Activated B cell treated with CpG ODN at 0.5 μM for 24 hours (primary cell): ENCODE measurements at regions of chr14 and their contacts with region 1.

Region 1: GRCh38 chr14:61475316-61475715 is 153.9 kb downstream of the PRKCH start:
- DNase-seq: no peak
- ATAC-seq: no peak
- H3K4me3 Mint-ChIP-seq: peak overlapping the region; percentile 19
- H3K27ac Mint-ChIP-seq: peak overlapping the region; percentile 77
- H3K4me1 Mint-ChIP-seq: peaks cover 96% of the 10 kb centered on the region
- H3K27me3 Mint-ChIP-seq: no peaks in the 10 kb centered on the region
- CTCF ChIP-seq: no peak

Region 2: DNA sequence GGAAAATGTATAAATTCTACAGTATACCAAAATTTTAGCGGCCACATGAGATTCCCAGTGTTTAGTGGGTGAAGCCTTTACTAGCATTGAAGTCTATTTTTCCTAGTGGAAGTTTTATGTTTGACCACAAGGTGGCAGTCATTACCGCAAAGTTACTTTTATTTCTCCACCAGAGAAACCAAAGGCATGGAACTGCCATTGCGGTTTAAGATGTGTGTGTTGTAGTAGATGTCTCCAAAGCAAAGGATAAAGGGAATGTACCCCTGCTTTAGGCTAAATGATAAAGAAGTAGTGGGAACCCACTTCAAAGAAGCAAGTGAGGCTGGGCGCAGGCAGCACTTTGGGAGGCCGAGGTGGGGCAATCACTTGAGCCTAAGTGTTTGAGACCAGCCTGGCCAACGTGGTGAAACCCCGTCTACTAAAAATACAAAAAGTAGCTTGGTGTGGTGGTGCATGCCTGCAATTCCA is 13.5 kb before region 1 on chr14:
- CTCF ChIA-PET with region 1: interaction called, 10 read pairs
- POLR2A ChIA-PET with region 1: interaction called, 6 read pairs
- intact Hi-C with region 1: no loop called
- DNase-seq: no peak
- ATAC-seq: peak; percentile 68
- H3K4me3 Mint-ChIP-seq: no peak overlapping the region
- H3K27ac Mint-ChIP-seq: no peak overlapping the region
- H3K4me1 Mint-ChIP-seq: peaks cover 16% of the 10 kb centered on the region
- H3K27me3 Mint-ChIP-seq: no peaks in the 10 kb centered on the region
- CTCF ChIP-seq: no peak

Region 3: DNA sequence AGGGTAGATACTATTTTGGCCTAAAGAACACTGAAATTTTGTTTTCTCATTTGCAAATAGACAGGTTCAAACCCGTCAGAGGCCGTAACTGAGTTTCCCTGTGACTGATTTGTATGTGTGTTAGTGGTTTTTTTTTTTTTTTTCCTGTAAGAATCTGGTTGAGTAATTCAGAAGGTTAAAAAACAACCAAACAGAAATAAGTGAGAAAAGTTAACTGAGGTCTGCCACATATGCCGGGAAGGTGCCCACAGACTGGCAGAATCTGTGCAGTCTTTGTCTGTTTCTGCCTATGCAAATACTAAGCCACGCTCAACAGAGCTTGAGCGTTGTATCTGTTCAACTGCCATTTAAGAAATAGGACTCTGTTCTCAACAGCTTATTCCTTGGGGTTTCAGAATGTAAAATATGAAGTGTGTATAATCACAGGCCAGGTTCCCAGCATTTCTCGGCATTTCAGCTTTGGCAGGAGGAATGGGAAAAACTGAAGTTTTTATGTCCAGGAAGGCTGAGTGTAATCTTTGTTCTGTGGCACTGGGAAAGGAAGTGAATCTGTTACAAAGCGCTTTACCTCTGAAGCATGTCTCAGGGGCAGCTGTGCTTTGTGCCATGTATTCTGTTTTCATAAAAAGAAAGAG is 28.0 kb after region 1 on chr14:
- CTCF ChIA-PET with region 1: interaction called, 83 read pairs
- POLR2A ChIA-PET with region 1: interaction called, 388 read pairs
- intact Hi-C with region 1: loop called (anchors 1 kb)
- DNase-seq: no peak
- ATAC-seq: peak; percentile 88
- H3K4me3 Mint-ChIP-seq: peak overlapping the region; percentile 82
- H3K27ac Mint-ChIP-seq: peak overlapping the region; percentile 99
- H3K4me1 Mint-ChIP-seq: peaks cover 97% of the 10 kb centered on the region
- H3K27me3 Mint-ChIP-seq: no peaks in the 10 kb centered on the region
- CTCF ChIP-seq: no peak

Region 4: DNA sequence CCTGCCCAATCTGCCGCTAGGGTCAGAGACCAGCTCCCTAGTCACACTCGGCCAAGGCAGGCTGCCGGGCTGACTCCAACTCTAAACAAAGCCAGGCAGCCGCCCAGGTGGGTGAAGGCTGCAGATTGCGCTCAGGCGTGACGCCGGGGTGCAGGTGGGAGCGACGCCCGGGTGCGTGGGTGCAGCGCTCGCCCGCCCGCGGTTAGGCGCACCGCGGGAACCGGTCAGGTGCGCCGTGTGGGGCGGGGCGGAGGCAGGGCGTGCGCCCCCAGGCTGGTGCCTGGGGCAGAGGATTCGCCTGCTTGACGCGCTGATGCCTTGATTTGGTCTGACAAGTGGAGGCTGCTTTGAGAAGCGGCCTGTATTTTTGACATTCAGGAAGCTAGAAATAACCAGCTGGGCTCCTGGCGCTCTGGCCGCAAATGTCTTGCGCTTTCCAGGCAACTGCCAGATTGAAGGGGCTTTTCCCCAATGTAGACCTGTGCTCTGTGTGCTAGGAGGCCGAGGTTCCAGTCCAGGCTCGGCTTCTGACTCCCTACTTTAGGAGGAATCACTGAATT is 93.3 kb after region 1 on chr14:
- CTCF ChIA-PET with region 1: interaction called, 19 read pairs
- POLR2A ChIA-PET with region 1: interaction called, 18 read pairs
- intact Hi-C with region 1: loop called (anchors 1 kb)
- DNase-seq: peak; percentile 74
- ATAC-seq: peak; percentile 89
- H3K4me3 Mint-ChIP-seq: peak overlapping the region; percentile 83
- H3K27ac Mint-ChIP-seq: peak overlapping the region; percentile 80
- H3K4me1 Mint-ChIP-seq: peaks cover 58% of the 10 kb centered on the region
- H3K27me3 Mint-ChIP-seq: no peaks in the 10 kb centered on the region
- CTCF ChIP-seq: no peak

Region 5: DNA sequence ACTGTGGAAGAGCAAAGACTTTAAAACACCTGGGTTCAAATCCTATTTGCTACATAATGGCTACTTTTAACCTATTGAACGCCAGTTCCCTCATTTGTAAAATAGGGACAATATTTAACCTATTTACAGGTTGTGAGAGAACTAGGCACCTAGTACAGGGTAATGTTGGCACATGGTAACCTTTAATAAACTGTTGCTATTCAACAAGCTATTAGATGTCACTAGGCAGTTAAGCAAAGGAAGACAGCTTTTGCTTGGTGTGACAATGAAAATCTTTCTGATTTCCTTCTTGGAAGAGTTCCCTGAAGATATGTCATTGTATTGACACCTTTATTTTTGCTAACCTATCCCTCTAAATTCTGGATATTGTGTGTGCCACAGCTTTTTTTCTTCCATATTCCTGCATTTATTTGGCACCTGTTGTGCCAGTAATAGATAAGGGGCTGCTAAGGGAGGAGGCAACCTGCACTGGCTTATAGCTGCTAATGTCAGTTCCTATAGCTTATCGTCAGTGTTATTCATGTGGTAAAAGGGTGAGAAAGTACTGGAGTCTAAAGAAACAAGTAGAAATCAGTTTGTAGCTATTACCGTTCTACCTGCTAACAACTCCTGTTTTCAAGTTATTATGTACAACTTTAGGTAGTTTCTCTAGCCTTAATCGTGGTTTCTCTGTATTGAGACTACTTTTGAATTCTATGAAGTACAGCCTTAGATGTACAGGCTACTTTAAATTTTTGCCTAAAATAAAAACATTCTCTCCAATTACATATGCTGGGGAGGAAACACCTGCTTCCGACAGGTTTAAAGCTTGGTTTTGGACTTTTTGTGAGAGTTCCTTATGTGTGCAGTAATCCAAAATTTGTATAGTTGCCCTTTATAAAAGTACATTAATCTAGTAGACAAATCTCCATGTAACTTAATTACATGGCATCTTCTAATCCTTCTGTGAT is 244.3 kb after region 1 on chr14:
- CTCF ChIA-PET with region 1: interaction called, 12 read pairs
- POLR2A ChIA-PET with region 1: interaction called, 23 read pairs
- intact Hi-C with region 1: no loop called
- DNase-seq: no peak
- ATAC-seq: peak; percentile 40
- H3K4me3 Mint-ChIP-seq: peak overlapping the region; percentile 69
- H3K27ac Mint-ChIP-seq: peak overlapping the region; percentile 84
- H3K4me1 Mint-ChIP-seq: peaks cover 83% of the 10 kb centered on the region
- H3K27me3 Mint-ChIP-seq: no peaks in the 10 kb centered on the region
- CTCF ChIP-seq: no peak

Region 6: DNA sequence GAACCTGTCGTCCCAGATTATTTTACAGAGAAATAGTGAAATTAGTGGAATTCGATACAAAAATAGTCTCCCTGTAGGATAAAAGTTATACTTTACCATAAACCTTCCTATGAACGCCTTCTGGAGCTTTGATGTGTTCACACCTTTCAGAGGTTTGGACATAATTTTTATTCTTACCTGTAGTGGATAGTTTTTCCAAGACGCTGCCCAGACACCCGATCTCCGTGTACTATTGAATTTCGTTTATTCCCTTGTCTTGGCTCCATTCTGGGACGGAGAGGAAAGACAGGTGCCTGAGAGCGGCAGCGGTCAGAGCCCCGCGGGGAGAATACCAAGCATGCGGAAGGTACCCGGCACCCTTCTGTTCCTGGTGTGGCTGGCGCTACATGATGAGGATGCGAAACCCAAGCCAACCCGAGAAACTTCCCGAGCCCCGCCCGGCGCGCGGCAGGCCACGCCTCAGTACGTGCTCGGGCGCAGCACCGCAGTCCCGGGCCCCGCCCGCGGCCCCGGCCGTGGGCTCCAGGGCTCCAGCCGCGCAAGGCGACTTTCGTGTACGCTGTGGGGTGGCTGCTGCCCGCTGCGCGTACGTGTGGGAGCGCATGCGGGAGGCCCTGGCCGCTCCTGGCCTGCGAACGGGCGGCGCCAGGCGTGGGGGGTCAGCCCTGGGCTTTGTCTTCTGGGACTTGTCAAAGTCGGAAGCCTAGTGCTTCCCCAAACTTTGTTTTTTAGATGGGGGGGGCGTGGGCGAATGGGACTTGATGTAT is 275.6 kb after region 1 on chr14:
- CTCF ChIA-PET with region 1: interaction called, 3 read pairs
- POLR2A ChIA-PET with region 1: interaction called, 10 read pairs
- intact Hi-C with region 1: loop called (anchors 1 kb)
- DNase-seq: peak; percentile 81
- ATAC-seq: peak; percentile 95
- H3K4me3 Mint-ChIP-seq: peak overlapping the region; percentile 87
- H3K27ac Mint-ChIP-seq: peak overlapping the region; percentile 90
- H3K4me1 Mint-ChIP-seq: peaks cover 41% of the 10 kb centered on the region
- H3K27me3 Mint-ChIP-seq: no peaks in the 10 kb centered on the region
- CTCF ChIP-seq: no peak

Region 7: DNA sequence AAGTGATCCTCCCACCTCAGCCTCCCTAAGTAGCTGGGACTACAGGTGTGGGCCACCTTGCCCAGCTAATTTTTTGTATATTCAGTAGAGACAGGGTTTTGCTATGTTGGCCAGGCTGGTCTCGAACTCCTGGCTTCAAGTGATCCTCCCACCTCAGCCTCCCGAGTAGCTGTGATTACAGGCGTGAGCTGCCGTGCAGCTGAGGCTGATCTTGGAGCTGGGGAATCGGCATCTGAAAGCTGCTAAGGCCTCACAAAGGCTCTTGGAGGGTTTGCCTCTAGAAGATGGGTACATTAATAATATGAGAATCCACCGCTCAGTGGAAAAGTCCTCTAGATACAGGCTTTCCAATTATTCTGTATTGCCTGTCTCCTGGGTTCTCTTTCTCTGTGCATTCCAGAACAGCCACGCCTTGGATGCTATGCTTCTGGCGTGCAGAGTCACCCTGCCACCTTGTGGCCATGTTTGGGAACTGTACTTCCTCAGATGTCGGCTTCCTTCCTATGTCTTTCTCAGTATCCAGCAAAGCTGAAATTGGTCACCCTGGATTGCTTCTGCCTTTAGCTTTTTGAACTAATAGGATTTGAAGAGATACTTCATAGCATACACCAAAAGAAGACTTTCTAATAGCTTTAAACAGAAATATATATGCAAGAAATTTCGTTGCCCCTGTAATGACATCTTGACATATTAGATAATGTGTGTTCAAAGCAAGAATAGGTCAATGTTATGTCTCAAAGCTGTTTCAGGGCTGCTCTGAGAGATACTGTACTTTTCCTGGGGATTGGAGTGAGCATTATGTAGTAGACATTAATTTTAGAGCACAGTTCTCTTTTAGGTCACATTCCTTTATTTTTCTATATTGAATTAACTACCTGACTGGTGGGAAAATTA is 362.3 kb after region 1 on chr14:
- CTCF ChIA-PET with region 1: interaction called, 15 read pairs
- POLR2A ChIA-PET with region 1: no interaction called
- intact Hi-C with region 1: no loop called
- DNase-seq: peak; percentile 48
- ATAC-seq: peak; percentile 92
- H3K4me3 Mint-ChIP-seq: no peak overlapping the region
- H3K27ac Mint-ChIP-seq: no peak overlapping the region
- H3K4me1 Mint-ChIP-seq: peaks cover 3% of the 10 kb centered on the region
- H3K27me3 Mint-ChIP-seq: peaks cover 3% of the 10 kb centered on the region
- CTCF ChIP-seq: peak; percentile 88